Ascending aorta (tissue), 2 donors: ENCODE measurements at regions of chr7 and their contacts with region 1.

Region 1: DNA sequence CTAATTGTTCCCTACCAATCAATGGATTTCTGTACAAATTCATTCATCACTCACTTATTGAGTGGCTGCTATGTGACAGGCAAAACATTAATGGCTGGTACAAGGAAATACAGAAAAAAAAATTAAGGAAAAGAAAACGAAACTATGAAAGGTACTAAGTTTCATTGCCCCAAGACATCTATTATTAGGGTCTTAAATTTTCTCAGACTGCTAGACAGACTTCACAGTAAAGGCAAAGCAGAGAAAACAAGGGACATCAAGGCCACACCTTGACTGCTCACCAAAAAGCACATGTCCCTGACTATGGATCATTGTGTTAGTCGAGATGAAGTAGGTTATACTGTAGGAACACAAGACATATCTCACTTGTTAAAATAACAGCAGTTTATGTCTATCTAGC is 36.5 kb downstream of the DGKI start:
- DNase-seq: no peak
- H3K4me3 ChIP-seq: no peak overlapping the region
- H3K27ac ChIP-seq: no peak overlapping the region
- H3K4me1 ChIP-seq: no peaks in the 10 kb centered on the region
- H3K27me3 ChIP-seq: no peaks in the 10 kb centered on the region
- CTCF ChIP-seq: no peak

Region 2: GRCh38 chr7:137626469-137627067 is 183.7 kb before region 1 on chr7:
- intact Hi-C with region 1: no loop called
- DNase-seq: no peak
- H3K4me3 ChIP-seq: no peak overlapping the region
- H3K27ac ChIP-seq: no peak overlapping the region
- H3K4me1 ChIP-seq: no peaks in the 10 kb centered on the region
- H3K27me3 ChIP-seq: no peaks in the 10 kb centered on the region
- CTCF ChIP-seq: peak in 2 of 3 experiments; percentile 51 to 71

Region 3: GRCh38 chr7:138015096-138015495 is 204.8 kb after region 1 on chr7:
- intact Hi-C with region 1: loop called (anchors 5 kb)
- DNase-seq: no peak
- H3K4me3 ChIP-seq: no peak overlapping the region
- H3K27ac ChIP-seq: no peak overlapping the region
- H3K4me1 ChIP-seq: no peaks in the 10 kb centered on the region
- H3K27me3 ChIP-seq: no peaks in the 10 kb centered on the region
- CTCF ChIP-seq: no peak